ENCODE measurements at regions of chr13 and their contacts with region 1.

Region 1: GRCh38 chr13:100573121-100573520 is 15.5 kb downstream of the GGACT start:
- DNase-seq: peak; percentile 83
- H3K4me3 Mint-ChIP-seq: no peak overlapping the region
- H3K27ac Mint-ChIP-seq: no peak overlapping the region
- H3K4me1 Mint-ChIP-seq: no peaks in the 10 kb centered on the region
- H3K27me3 Mint-ChIP-seq: no peaks in the 10 kb centered on the region
- CTCF ChIP-seq: peak; percentile 64

Region 2: DNA sequence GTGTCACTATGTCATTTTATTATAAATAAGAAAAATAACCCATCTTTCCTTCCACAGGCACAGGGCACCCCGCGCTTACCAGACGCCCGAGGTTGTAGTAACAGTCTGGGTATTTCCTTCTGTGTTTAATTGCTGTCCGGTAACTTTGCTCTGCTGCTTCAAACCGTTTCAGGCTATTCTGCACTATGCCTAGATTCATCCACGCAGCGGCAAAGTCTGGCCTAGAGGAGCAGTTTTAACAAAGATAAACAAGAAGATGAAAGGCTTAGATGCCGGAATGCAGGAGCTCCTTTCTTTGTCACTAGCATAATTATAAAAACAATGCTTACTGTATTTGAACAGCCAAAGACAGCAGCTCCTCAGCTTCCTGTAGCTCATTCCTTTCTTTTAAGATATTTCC is 52.3 kb after region 1 on chr13:
- CTCF ChIA-PET with region 1: interaction called, 12 read pairs
- POLR2A ChIA-PET with region 1: no interaction called
- intact Hi-C with region 1: no loop called
- DNase-seq: no peak
- H3K4me3 Mint-ChIP-seq: no peak overlapping the region
- H3K27ac Mint-ChIP-seq: no peak overlapping the region
- H3K4me1 Mint-ChIP-seq: no peaks in the 10 kb centered on the region
- H3K27me3 Mint-ChIP-seq: no peaks in the 10 kb centered on the region
- CTCF ChIP-seq: no peak

Region 3: GRCh38 chr13:100987953-100988352 is 414.8 kb after region 1 on chr13:
- CTCF ChIA-PET with region 1: interaction called, 4 read pairs
- POLR2A ChIA-PET with region 1: no interaction called
- intact Hi-C with region 1: loop called (anchors 1 kb)
- DNase-seq: peak; percentile 49
- H3K4me3 Mint-ChIP-seq: no peak overlapping the region
- H3K27ac Mint-ChIP-seq: no peak overlapping the region
- H3K4me1 Mint-ChIP-seq: no peaks in the 10 kb centered on the region
- H3K27me3 Mint-ChIP-seq: no peaks in the 10 kb centered on the region
- CTCF ChIP-seq: no peak

Region 4: GRCh38 chr13:101127741-101128353 is 554.7 kb after region 1 on chr13:
- CTCF ChIA-PET with region 1: interaction called, 9 read pairs
- POLR2A ChIA-PET with region 1: interaction called, 3 read pairs
- intact Hi-C with region 1: loop called (anchors 1 kb)
- DNase-seq: peak; percentile 73
- H3K4me3 Mint-ChIP-seq: no peak overlapping the region
- H3K27ac Mint-ChIP-seq: no peak overlapping the region
- H3K4me1 Mint-ChIP-seq: no peaks in the 10 kb centered on the region
- H3K27me3 Mint-ChIP-seq: peaks cover 20% of the 10 kb centered on the region
- CTCF ChIP-seq: peak; percentile 85

Region 5: DNA sequence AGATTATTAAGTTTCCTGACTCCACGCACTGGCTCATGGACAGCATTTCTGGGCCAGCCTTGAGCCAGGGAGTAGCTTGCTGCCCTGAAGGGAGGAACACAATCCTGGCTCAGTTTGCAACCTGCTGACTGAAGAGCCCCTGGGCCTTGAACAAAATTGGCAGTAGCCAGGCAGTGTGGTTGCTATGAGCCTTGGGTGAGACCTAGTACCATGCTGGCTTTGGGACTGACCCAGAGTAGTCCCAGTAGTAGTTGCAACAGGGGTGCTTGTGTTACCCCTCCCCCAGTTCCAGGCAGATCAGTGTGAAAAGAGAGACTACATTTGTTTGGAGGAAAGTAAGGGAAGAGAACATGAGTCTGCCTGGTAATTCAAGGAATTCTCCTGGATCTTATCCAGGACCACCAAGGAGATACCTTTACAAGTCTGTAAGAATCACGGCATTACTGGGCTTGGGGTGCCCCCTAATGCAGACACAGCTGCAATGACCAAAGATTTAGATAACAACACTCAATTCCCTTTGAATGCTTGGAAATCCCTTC is 901.4 kb after region 1 on chr13:
- CTCF ChIA-PET with region 1: no interaction called
- POLR2A ChIA-PET with region 1: no interaction called
- intact Hi-C with region 1: loop called (anchors 5 kb)
- DNase-seq: peak; percentile 73
- H3K4me3 Mint-ChIP-seq: no peak overlapping the region
- H3K27ac Mint-ChIP-seq: no peak overlapping the region
- H3K4me1 Mint-ChIP-seq: peaks cover 19% of the 10 kb centered on the region
- H3K27me3 Mint-ChIP-seq: no peaks in the 10 kb centered on the region
- CTCF ChIP-seq: peak; percentile 54